ENCODE measurements at regions of chr1 and their contacts with region 1.

Region 1: DNA sequence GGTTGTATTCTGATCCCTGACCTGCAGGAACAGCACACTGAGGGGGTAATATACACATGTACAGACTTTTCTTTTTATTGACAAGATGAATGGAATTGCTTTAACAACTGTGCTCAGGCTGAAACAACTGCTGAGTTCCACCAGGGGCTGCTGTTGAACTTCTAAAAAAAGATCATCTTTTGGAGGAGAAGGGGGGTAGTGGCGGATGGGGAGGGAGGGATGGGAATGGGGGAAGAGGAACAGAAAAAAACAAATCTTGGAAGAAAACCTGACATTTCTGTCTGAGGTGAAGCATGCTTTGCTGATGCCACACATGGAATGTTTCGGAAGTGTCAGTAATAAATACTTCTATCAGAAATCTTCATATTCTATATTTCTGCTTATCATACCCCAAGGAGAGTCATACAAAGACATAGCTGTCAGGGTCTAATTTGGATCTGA is 75.0 kb downstream of the RWDD3 start:
- DNase-seq: peak; percentile 44 to 59 (median 55)
- ATAC-seq: peak; percentile 91
- H3K4me3 ChIP-seq: no peak overlapping the region
- H3K27ac ChIP-seq: no peak overlapping the region
- H3K4me1 ChIP-seq: no peaks in the 10 kb centered on the region
- H3K27me3 ChIP-seq: no peaks in the 10 kb centered on the region; a peak in 1 of 5 replicates
- CTCF ChIP-seq: peak; percentile 54 to 71 (median 59)
- EP300 ChIP-seq: no peak
- POLR2A ChIP-seq: no peak
- RAD21 ChIP-seq: peak in 1 of 2 experiments; percentile 64; a peak in 3 of 4 replicates

Region 2: GRCh38 chr1:96845464-96845863 is 1536.4 kb after region 1 on chr1:
- CTCF ChIA-PET with region 1: interaction called, 3 read pairs
- POLR2A ChIA-PET with region 1: no interaction called
- in situ Hi-C with region 1: no loop called
- intact Hi-C with region 1: loop called (anchors 10 kb)
- DNase-seq: peak; percentile 53 to 69 (median 57)
- ATAC-seq: peak; percentile 100
- H3K4me3 ChIP-seq: no peak overlapping the region
- H3K27ac ChIP-seq: no peak overlapping the region
- H3K4me1 ChIP-seq: no peaks in the 10 kb centered on the region
- H3K27me3 ChIP-seq: no peaks in the 10 kb centered on the region; a peak in 1 of 5 replicates
- CTCF ChIP-seq: peak; percentile 77 to 93 (median 80)
- EP300 ChIP-seq: no peak
- POLR2A ChIP-seq: no peak
- RAD21 ChIP-seq: peak; percentile 65 to 75